ENCODE measurements at regions of chr3 and their contacts with region 1.

Region 1: GRCh38 chr3:27357665-27358258 is 11.4 kb downstream of the NEK10 start:
- DNase-seq: peak; percentile 80
- ATAC-seq: peak; percentile 97
- H3K4me3 Mint-ChIP-seq: no peak overlapping the region
- H3K27ac Mint-ChIP-seq: no peak overlapping the region
- H3K4me1 Mint-ChIP-seq: peaks cover 27% of the 10 kb centered on the region
- H3K27me3 Mint-ChIP-seq: peaks cover 2% of the 10 kb centered on the region

Region 2: GRCh38 chr3:27368831-27369607 is 11.3 kb after region 1 on chr3 and contains the start of gene NEK10:
- CTCF ChIA-PET with region 1: interaction called, 18 read pairs
- DNase-seq: peak; percentile 94
- ATAC-seq: peak; percentile 98
- H3K4me3 Mint-ChIP-seq: peak within 1 kb of the TSS; percentile 85
- H3K27ac Mint-ChIP-seq: peak within 1 kb of the TSS; percentile 70
- H3K4me1 Mint-ChIP-seq: peaks cover 16% of the 10 kb centered on the region
- H3K27me3 Mint-ChIP-seq: peaks cover 2% of the 10 kb centered on the region
- total RNA-seq, gene NEK10: 0.70 to 0.73 TPM

Region 3: DNA sequence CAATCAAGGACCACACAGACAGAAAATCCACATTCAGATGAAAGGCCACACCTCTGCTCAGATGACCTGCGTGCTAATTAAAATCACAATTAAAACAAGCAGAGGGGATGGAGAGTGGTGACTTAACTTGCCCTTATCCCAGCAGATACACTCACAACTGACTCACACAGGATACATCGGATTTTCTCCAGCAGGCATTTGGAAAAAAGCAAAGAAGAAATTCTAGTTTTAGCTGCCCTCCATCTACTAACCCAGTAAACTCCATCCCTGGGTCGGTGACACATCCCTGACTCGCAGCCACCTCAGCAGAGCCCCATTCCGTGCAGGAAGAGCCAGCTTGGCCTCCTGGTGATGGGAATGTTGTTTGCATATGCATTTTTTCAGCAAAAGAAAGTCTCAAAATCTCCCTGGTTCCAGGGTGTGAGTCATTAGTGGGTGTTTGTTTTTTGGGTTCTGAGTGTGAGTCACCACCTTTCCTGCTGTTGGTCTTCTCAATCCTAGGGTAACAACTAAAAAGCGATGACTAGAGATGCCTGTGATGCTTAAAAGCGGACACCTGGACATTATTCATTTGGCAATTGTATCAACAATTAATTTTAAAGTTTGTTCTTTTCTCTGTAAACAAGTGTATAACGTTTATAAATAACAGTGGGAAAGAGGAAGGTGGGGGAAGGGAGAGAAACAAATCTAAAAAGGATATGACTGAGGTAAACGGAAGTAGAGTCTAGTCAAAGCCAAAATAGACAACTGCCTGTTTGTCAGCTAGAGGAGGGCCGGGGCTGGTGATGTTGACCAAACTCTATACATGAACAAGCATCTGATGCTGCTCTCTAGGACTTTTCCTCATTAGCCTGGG is 176.2 kb after region 1 on chr3:
- CTCF ChIA-PET with region 1: no interaction called
- DNase-seq: peak; percentile 77
- ATAC-seq: peak; percentile 94
- H3K4me3 Mint-ChIP-seq: peak overlapping the region; percentile 45
- H3K27ac Mint-ChIP-seq: peak overlapping the region; percentile 96
- H3K4me1 Mint-ChIP-seq: peaks cover 25% of the 10 kb centered on the region
- H3K27me3 Mint-ChIP-seq: no peaks in the 10 kb centered on the region

Region 4: DNA sequence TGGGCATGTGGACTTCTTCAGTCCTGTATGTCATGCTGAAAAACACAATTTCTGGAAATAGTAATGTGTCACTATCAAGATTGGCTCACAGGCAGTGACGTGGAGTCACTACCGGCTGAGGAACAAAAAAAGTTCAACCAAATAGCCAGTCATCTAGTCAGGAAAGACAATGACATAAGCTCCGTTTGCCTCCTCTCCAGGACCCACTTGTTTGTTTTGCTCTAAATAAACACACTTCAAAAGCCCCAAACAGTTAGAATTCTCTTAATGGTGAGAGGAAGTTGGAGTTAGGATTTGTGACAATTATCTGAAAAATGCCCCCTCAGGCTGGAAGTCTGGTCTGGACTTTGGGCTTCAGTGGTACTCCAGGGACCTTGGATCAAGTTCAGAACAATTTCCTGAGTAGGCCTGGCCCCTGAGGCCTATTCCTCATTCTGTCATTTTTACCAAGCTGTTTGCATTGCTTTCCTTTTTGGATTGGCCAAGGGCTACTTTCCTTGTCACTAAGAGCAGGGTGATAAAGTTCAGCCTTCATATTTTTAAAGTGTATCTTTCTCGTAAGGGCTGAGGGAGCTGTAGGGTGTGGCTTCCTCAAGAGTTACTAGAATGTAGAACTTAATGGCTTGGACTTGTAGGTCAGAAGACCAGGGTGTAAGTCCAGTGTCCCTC is 265.5 kb after region 1 on chr3:
- CTCF ChIA-PET with region 1: no interaction called
- DNase-seq: no peak
- ATAC-seq: no peak
- H3K4me3 Mint-ChIP-seq: no peak overlapping the region
- H3K27ac Mint-ChIP-seq: no peak overlapping the region
- H3K4me1 Mint-ChIP-seq: peaks cover 33% of the 10 kb centered on the region
- H3K27me3 Mint-ChIP-seq: no peaks in the 10 kb centered on the region